Activated T-helper 1 cell treated with anti-CD3 and anti-CD28 coated beads, Interleukin-12 subunit alpha, Interleukin-12 subunit beta, Interleukin-2, Interleukin-4 antibody, amounts not matched to agents 30 ng/mL and 10 ng/mL and 1 ng/mL, durations not matched to agents 14 hours and 24 hours and 36 hours (primary cell): ENCODE measurements at regions of chr2 and their contacts with region 1.

Region 1: DNA sequence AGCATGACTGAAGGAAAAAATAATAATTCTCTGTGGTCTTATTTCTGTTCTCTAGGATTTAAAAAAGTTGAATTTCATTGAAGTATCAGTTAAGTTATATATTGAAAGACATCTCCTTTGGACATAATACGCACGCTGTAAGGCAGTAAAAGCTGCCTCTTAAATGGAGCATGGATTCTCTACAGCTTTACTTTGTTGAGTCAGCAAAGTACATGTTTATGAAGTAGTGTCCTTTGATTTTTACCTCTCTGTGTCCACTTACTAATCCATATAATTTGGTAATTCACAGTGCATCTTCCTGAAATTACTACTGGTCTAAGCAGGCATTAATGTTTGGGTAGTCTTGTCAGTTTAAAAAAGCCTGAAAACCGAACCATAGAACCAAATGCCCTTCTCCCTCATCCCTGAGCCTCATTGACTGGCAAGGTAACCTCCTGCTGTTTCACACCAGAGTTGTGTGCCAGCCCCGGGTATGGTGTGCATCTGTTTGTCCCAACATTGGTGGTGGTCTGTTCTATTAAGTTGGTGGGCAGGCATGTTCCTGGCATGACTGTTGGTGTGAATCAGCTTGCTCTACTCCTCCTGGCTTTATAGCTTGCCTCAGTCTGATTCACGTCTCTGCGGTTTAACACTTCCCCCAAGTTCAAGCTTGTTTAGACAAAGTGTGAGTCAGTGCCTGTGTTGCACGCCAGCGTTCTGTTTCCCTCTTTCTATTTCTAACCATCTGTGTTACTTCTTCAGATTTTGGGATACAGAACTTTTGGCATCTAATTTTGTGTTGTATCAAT is 71.0 kb upstream of the ITM2C start:
- DNase-seq: peak; percentile 73
- H3K4me3 Mint-ChIP-seq: peak overlapping the region; percentile 78
- H3K27ac Mint-ChIP-seq: peak overlapping the region; percentile 97
- H3K4me1 Mint-ChIP-seq: peaks cover 61% of the 10 kb centered on the region
- H3K27me3 Mint-ChIP-seq: peaks cover 2% of the 10 kb centered on the region

Region 2: GRCh38 chr2:230347659-230348305 is 446.0 kb before region 1 on chr2:
- intact Hi-C with region 1: loop called (anchors 5 kb)
- DNase-seq: peak; percentile 32
- H3K4me3 Mint-ChIP-seq: peak overlapping the region; percentile 59
- H3K27ac Mint-ChIP-seq: peak overlapping the region; percentile 90
- H3K4me1 Mint-ChIP-seq: peaks cover 80% of the 10 kb centered on the region
- H3K27me3 Mint-ChIP-seq: no peaks in the 10 kb centered on the region

Region 3: GRCh38 chr2:230441227-230441897 is 352.4 kb before region 1 on chr2:
- intact Hi-C with region 1: loop called (anchors 5 kb)
- DNase-seq: peak; percentile 34
- H3K4me3 Mint-ChIP-seq: peak overlapping the region; percentile 31
- H3K27ac Mint-ChIP-seq: peak overlapping the region; percentile 90
- H3K4me1 Mint-ChIP-seq: peaks cover 65% of the 10 kb centered on the region
- H3K27me3 Mint-ChIP-seq: no peaks in the 10 kb centered on the region

Region 4: DNA sequence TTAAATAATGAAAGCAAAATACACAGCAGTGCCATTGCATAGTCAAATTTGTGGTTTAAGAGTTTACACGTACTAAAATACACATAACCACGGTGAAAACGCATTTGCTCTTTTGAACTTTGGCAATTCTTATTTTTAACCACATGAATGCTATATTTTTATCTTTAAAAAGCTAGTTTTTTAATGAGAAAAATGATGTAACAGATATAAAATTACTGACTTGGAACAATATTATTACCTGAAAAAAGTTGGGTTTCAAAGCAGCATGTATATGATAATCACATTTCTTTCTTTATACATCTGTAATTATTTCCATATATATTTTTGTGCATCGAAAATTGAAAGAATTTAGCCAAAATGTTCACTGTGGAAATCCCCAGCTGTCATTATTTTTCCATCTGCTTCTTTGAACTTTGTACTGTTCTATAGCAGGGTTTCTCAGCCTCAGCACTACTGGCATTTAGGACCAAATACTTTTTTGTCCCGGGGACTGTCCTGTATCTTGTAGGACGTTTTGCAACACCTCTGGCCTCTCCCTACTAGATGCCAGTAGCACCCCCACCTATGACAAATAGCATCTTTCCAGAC is 157.0 kb before region 1 on chr2:
- intact Hi-C with region 1: loop called (anchors 2 kb)
- DNase-seq: no peak
- H3K4me3 Mint-ChIP-seq: peak overlapping the region; percentile 15
- H3K27ac Mint-ChIP-seq: peak overlapping the region; percentile 83
- H3K4me1 Mint-ChIP-seq: peaks cover 31% of the 10 kb centered on the region
- H3K27me3 Mint-ChIP-seq: no peaks in the 10 kb centered on the region

Region 5: GRCh38 chr2:230643576-230644291 is 150.0 kb before region 1 on chr2:
- intact Hi-C with region 1: loop called (anchors 1 kb)
- DNase-seq: peak; percentile 51
- H3K4me3 Mint-ChIP-seq: peak overlapping the region; percentile 39
- H3K27ac Mint-ChIP-seq: peak overlapping the region; percentile 97
- H3K4me1 Mint-ChIP-seq: peaks cover 29% of the 10 kb centered on the region
- H3K27me3 Mint-ChIP-seq: no peaks in the 10 kb centered on the region

Region 6: GRCh38 chr2:230751062-230751461 is 42.7 kb before region 1 on chr2:
- intact Hi-C with region 1: loop called (anchors 1 kb)
- DNase-seq: peak; percentile 12
- H3K4me3 Mint-ChIP-seq: no peak overlapping the region
- H3K27ac Mint-ChIP-seq: peak overlapping the region; percentile 83
- H3K4me1 Mint-ChIP-seq: peaks cover 77% of the 10 kb centered on the region
- H3K27me3 Mint-ChIP-seq: no peaks in the 10 kb centered on the region

Region 7: GRCh38 chr2:230781130-230781797 is 12.5 kb before region 1 on chr2:
- intact Hi-C with region 1: loop called (anchors 1 kb)
- DNase-seq: peak; percentile 47
- H3K4me3 Mint-ChIP-seq: peak overlapping the region; percentile 30
- H3K27ac Mint-ChIP-seq: peak overlapping the region; percentile 75
- H3K4me1 Mint-ChIP-seq: peaks cover 73% of the 10 kb centered on the region
- H3K27me3 Mint-ChIP-seq: no peaks in the 10 kb centered on the region